BJ (cell line): ENCODE measurements at regions of chr11 and their contacts with region 1.

Region 1: DNA sequence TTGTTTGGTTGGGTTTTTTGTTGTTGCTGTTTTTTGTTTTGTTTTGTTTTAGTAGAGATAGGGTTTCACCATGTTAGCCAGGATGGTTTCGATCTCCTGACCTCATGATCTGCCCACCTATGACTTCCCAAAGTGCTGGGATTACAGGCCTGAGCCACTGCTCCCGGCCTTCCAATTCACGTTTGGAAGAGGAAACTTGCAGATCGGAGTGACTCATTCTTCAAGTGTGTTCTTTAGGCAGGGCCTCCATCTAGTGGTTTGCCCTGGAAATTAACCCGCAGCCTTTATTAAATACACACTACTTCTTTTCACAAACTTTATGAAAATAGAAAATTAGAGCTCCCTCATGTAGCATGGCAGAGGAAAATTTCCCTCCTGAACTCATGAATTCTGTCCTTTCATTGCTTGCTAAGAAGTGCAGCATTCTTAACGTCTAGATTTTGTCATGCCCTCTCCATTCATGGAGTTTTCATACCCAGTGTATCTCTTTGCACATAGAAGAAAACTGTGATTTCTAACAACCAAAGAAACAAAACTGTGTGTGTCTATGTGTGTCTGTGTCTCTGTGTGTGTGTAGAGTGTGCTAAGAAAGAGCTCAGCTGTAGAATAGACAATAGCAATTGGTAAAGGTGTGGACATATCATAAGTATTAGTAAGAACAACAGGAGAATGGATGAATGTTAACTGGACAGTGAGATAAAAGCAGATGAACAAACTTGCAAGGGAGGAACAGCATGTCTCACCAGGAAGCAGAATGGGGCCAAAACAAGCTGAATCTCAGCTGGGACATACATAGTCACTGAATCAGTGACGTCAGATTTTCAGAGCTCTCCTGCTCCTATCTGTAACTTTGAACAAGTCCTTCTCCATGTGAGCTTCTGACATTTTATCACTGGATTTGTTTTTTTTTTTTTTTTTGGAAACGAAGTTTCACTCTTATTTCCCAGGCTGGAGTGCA is 118.4 kb downstream of the BBOX1 start:
- DNase-seq: peak; percentile 26
- H3K4me3 ChIP-seq: no peak overlapping the region
- H3K27me3 ChIP-seq: no peaks in the 10 kb centered on the region
- CTCF ChIP-seq: peak; percentile 84

Region 2: DNA sequence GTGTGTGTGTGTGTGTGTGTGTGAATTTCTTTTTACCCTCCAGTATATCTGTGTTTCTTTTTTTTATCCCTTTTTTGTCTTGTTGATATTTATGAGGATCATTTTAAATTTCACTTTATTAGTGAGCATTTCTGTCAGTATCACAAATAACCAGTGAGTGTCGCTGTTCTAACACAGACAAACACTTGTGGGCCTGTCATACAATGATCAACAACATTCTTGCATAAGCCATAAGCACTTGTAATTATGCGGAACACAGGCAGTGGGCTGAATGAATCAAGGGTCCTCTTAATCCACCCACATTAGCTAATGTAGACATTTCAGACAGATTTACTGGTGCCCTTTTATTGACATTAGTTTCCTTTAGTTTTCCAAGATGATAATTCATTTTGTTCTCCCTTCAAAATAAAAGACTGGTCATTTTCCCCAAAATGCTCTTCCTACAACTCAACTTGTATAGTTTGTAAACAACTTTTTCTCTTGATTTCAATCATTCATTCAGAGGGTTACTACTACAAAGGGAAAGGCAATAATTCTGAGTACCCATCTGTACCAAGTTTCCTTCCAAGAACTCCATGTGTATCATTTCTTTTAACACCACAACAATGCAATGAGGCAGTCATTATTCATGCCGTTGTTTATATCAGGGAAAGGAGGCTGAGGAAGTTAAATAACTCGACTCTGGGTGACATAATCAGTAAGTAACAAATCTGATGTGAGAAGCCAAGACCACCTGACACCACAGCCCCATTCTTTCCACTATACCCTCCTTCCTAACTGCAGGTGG is 861.6 kb before region 1 on chr11:
- CTCF ChIA-PET with region 1: interaction called, 15 read pairs
- POLR2A ChIA-PET with region 1: no interaction called
- DNase-seq: peak; percentile 9
- H3K4me3 ChIP-seq: no peak overlapping the region
- H3K27me3 ChIP-seq: no peaks in the 10 kb centered on the region
- CTCF ChIP-seq: peak; percentile 71

Region 3: GRCh38 chr11:26753723-26754504 is 405.1 kb before region 1 on chr11:
- CTCF ChIA-PET with region 1: interaction called, 24 read pairs
- POLR2A ChIA-PET with region 1: no interaction called
- DNase-seq: peak; percentile 26
- H3K4me3 ChIP-seq: no peak overlapping the region
- H3K27me3 ChIP-seq: 0 out of 2 replicates have a peak, but pooled peaks cover 1% of the 10 kb centered on the region
- CTCF ChIP-seq: peak; percentile 75

Region 4: GRCh38 chr11:27174021-27174420 is 15.0 kb after region 1 on chr11:
- CTCF ChIA-PET with region 1: interaction called, 11 read pairs
- POLR2A ChIA-PET with region 1: no interaction called
- DNase-seq: no peak
- H3K4me3 ChIP-seq: no peak overlapping the region
- H3K27me3 ChIP-seq: peaks cover 2% of the 10 kb centered on the region; the same call in 1 of the 2 replicates
- CTCF ChIP-seq: no peak